Activated CD8-positive, alpha-beta memory T cell treated with anti-CD3 and anti-CD28 coated beads, Interleukin-2, amount 10 ng/mL, durations not matched to agents 7 days and 5 days (primary cell): ENCODE measurements at regions of chr11 and their contacts with region 1.

Region 1: GRCh38 chr11:797296-798092 is 587 bp downstream of the SLC25A22 start:
- DNase-seq: peak; percentile 90
- ATAC-seq: peak; percentile 56
- H3K4me3 Mint-ChIP-seq: peak overlapping the region; percentile 85
- H3K27ac Mint-ChIP-seq: peak overlapping the region; percentile 84
- H3K4me1 Mint-ChIP-seq: peaks cover 13% of the 10 kb centered on the region
- H3K27me3 Mint-ChIP-seq: no peaks in the 10 kb centered on the region

Region 2: DNA sequence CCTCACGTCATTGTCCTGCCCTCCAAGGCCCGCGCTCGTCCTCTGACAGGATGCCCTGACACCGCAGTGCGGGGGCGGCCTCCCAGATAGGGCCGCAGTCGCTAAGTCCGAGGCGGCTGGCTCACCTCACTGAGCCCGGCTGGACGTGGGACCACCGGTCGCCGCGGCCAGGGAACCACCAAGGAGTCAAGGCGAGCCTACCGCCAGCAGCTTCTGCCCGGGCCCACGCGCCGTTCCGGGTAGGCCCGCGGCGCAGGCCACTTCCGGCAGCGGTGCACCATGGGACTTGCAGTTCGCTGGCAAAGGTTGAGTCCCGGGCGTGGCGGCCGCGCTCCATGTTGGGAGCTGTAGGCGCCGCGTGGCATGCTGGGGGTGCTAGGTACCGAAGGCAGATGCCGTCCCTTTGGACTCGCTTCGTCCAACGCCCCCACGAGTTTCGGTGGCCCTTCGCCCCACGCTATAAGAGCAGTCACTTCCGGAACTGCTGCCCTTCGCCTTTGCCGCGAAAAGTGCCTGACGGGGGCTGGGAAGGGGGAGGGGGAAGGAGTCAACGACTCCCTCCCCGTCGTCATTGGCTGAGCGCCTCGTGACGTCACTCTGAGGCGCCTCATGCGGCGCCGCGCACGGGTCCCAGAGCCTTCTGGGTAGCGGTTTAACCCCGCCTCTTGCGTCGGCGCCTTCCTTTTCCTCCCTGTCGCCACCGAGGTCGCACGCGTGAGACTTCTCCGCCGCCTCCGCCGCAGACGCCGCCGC is 12.0 kb after region 1 on chr11 and contains the start of gene RPLP2:
- CTCF ChIA-PET with region 1: interaction called, 17 read pairs
- DNase-seq: peak; percentile 99
- ATAC-seq: peak; percentile 82
- H3K4me3 Mint-ChIP-seq: peak within 1 kb of the TSS; percentile 95
- H3K27ac Mint-ChIP-seq: peak within 1 kb of the TSS; percentile 99
- H3K4me1 Mint-ChIP-seq: peaks cover 41% of the 10 kb centered on the region
- H3K27me3 Mint-ChIP-seq: no peaks in the 10 kb centered on the region
- total RNA-seq, gene RPLP2: 1,844 to 1,872 TPM